Panc1 (cell line): ENCODE measurements at regions of chr6 and their contacts with region 1.

Region 1: GRCh38 chr6:140627002-140627401 is 1252.6 kb upstream of the CITED2 start:
- DNase-seq: no peak
- ATAC-seq: no peak
- H3K4me3 ChIP-seq: no peak overlapping the region
- H3K27ac ChIP-seq: no peak overlapping the region
- H3K4me1 ChIP-seq: no peaks in the 10 kb centered on the region
- H3K27me3 ChIP-seq: no peaks in the 10 kb centered on the region
- CTCF ChIP-seq: no peak

Region 2: DNA sequence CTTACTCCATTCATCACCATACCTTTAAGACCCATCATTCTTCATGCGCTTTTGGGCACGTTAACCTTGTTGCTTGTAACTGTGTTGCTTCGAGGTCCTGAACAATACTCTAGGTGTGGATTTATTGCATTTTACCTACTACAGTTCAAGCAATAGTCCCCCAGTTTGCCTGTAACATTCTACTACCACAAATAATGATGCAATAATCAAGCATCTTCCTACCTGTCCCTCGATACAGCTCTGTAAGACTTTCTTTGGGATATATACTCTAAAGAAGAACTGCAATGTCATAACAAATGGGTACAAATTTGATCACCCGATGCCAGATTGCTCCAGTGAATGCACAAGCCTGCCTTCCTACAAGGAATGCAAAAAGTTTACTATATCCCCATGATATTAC is 163.1 kb after region 1 on chr6:
- CTCF ChIA-PET with region 1: no interaction called
- POLR2A ChIA-PET with region 1: no interaction called
- in situ Hi-C with region 1: no loop called
- intact Hi-C with region 1: no loop called
- DNase-seq: no peak
- ATAC-seq: no peak
- H3K4me3 ChIP-seq: no peak overlapping the region
- H3K27ac ChIP-seq: no peak overlapping the region
- H3K4me1 ChIP-seq: no peaks in the 10 kb centered on the region
- H3K27me3 ChIP-seq: no peaks in the 10 kb centered on the region
- CTCF ChIP-seq: no peak

Region 3: GRCh38 chr6:140921366-140922226 is 294.6 kb after region 1 on chr6:
- CTCF ChIA-PET with region 1: no interaction called
- POLR2A ChIA-PET with region 1: interaction called, 14 read pairs
- in situ Hi-C with region 1: no loop called
- intact Hi-C with region 1: no loop called
- DNase-seq: peak; percentile 72
- ATAC-seq: peak; percentile 81
- H3K4me3 ChIP-seq: no peak overlapping the region
- H3K27ac ChIP-seq: no peak overlapping the region
- H3K4me1 ChIP-seq: no peaks in the 10 kb centered on the region
- H3K27me3 ChIP-seq: no peaks in the 10 kb centered on the region
- CTCF ChIP-seq: peak; percentile 72; the same call in 1 of the 2 replicates